Activated CD4-positive, alpha-beta memory T cell treated with anti-CD3 and anti-CD28 coated beads for 36 hours (primary cell): ENCODE measurements at regions of chr20 and their contacts with region 1.

Region 1: DNA sequence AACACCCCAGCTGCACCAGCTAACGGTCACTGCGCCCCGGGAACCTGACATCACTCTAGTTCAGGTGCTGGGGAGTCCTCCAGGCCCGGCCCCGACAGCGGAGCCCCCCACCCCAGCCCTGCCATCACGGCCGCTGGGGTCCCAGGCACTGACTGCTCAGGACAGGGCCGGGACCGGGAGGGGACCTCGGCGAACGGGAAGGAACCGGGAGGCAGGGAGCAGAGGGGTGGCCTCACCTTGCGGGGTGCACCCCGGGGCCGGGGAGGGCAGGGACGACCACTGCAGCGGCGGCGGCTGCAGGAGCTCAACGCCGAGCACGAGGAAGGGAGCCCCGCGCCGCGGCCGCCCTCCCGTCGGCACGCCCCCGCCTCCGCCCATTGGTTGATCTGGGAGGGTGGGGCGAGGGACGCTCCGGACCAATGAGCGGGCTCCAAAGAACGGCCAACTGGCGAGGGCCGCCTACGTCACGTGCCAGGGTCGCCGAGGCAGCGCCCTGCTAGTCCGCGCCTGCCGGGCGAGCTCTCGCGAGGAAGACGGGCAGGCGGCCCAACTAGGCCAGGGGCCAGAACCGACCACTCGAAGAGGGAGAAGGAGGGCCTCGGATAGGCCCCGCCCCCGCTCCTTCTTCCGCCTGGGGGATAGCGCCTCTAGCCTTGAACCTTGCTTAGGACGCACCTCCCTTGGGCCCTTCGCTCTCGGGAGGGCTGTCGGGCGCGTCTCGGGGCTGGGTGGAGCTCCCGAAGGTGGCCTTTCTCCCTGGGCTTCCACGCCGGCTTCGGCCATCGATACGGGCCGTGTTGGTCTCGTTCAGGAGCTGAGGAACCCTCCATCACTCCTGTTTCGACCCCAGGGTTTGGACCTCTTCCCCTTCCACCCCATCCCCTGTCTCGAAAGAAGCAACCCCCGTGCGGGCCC is at the start of gene ADISSP:
- DNase-seq: peak; percentile 99
- H3K4me3 Mint-ChIP-seq: peak within 1 kb of the TSS; percentile 87
- H3K27ac Mint-ChIP-seq: peak within 1 kb of the TSS; percentile 84
- H3K4me1 Mint-ChIP-seq: peaks cover 23% of the 10 kb centered on the region
- H3K27me3 Mint-ChIP-seq: no peaks in the 10 kb centered on the region
- total RNA-seq, gene ADISSP: 50.6 to 51.4 TPM

Region 2: GRCh38 chr20:3679749-3680700 is 87.7 kb before region 1 on chr20:
- CTCF ChIA-PET with region 1: interaction called, 11 read pairs
- POLR2A ChIA-PET with region 1: no interaction called
- intact Hi-C with region 1: no loop called
- DNase-seq: no peak
- H3K4me3 Mint-ChIP-seq: no peak overlapping the region
- H3K27ac Mint-ChIP-seq: no peak overlapping the region
- H3K4me1 Mint-ChIP-seq: no peaks in the 10 kb centered on the region
- H3K27me3 Mint-ChIP-seq: peaks cover 38% of the 10 kb centered on the region

Region 3: GRCh38 chr20:3753098-3753980 is 14.3 kb before region 1 on chr20:
- CTCF ChIA-PET with region 1: interaction called, 19 read pairs
- POLR2A ChIA-PET with region 1: no interaction called
- intact Hi-C with region 1: loop called (anchors 1 kb)
- DNase-seq: peak; percentile 75
- H3K4me3 Mint-ChIP-seq: no peak overlapping the region
- H3K27ac Mint-ChIP-seq: peak overlapping the region; percentile 58
- H3K4me1 Mint-ChIP-seq: peaks cover 6% of the 10 kb centered on the region
- H3K27me3 Mint-ChIP-seq: no peaks in the 10 kb centered on the region

Region 4: GRCh38 chr20:3786665-3787323 is 19.1 kb after region 1 on chr20 and contains the start of gene CENPB:
- CTCF ChIA-PET with region 1: interaction called, 16 read pairs
- POLR2A ChIA-PET with region 1: interaction called, 18 read pairs
- intact Hi-C with region 1: loop called (anchors 1 kb)
- DNase-seq: peak; percentile 93
- H3K4me3 Mint-ChIP-seq: peak within 1 kb of the TSS; percentile 83
- H3K27ac Mint-ChIP-seq: peak within 1 kb of the TSS; percentile 79
- H3K4me1 Mint-ChIP-seq: peaks cover 38% of the 10 kb centered on the region
- H3K27me3 Mint-ChIP-seq: no peaks in the 10 kb centered on the region
- total RNA-seq, gene CENPB: 50.1 to 51.9 TPM

Region 5: DNA sequence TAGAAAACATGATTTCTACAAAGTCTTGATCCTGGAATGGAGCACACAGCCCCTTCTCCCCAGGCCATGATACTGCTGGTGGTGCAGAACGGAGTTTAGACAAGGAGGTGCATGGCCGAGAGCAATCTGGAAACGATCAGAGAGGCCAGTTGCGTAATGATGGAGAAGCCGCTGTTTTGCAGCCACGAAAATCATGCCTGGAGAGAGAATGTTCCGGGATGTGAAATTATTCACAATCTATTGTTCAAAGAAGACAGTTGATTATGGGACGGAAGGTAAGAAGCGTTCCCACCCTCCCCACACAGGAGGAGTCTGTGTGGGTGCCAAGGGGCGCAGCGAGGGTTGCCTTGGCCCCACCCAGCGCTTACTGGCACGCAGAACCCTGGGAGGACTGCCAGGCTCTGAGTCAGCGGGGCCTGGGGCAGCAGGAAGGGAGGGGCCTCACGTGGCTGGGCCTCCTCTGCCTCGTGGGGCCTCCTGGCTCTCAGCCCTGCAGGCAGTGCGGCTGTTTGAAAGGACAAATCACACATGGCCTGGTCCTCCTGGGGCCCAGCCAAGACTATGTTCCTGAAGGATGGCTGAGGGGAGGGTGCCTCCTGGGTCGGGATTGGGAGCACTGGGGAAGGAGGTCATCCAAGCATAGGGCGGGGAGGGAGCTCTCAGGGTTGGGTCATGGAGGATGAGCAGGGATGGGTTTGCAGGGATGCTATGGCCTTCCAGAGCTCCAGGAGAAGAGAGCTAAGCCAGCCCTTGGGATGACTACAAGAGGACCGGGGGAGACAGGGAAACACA is 44.0 kb after region 1 on chr20:
- CTCF ChIA-PET with region 1: interaction called, 3 read pairs
- POLR2A ChIA-PET with region 1: interaction called, 7 read pairs
- intact Hi-C with region 1: loop called (anchors 2 kb)
- DNase-seq: peak; percentile 97
- H3K4me3 Mint-ChIP-seq: peak overlapping the region; percentile 82
- H3K27ac Mint-ChIP-seq: peak overlapping the region; percentile 99
- H3K4me1 Mint-ChIP-seq: peaks cover 66% of the 10 kb centered on the region
- H3K27me3 Mint-ChIP-seq: no peaks in the 10 kb centered on the region

Region 6: GRCh38 chr20:3854462-3854871 is 86.8 kb after region 1 on chr20:
- CTCF ChIA-PET with region 1: interaction called, 12 read pairs
- POLR2A ChIA-PET with region 1: no interaction called
- intact Hi-C with region 1: no loop called
- DNase-seq: no peak
- H3K4me3 Mint-ChIP-seq: no peak overlapping the region
- H3K27ac Mint-ChIP-seq: peak overlapping the region; percentile 23
- H3K4me1 Mint-ChIP-seq: peaks cover 2% of the 10 kb centered on the region
- H3K27me3 Mint-ChIP-seq: no peaks in the 10 kb centered on the region

Region 7: DNA sequence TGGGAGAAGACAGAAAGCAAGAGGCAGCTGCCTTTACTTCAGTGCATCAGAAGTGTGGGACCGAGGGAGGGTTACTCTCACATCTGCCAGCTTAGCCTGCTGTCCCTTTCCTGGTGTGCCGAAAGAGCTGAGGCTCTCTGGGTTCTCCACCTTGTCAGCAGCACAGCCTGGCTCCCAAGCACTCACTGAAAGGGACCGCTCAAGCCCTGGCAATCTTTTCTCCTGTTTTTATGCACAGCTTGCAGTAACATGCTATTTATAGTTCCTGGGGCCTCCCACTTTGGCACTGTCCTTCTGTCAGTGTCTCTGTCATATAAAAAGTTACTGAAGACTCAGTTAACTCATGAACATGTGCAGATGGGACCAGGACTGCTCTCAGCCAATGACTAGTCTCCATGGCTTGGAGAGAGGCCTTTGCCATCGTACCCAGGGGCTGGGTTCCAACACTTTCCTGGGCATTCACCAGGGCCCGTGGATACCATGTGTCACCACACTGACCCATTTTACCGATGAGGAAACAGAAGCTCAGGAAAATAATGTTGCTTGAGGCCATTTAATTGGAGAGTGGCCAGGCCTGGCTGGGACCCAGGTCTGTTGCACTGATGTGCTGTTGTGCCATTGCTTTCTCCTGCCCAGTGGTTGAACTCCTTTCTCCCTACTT is 167.7 kb after region 1 on chr20:
- CTCF ChIA-PET with region 1: no interaction called
- POLR2A ChIA-PET with region 1: no interaction called
- intact Hi-C with region 1: no loop called
- DNase-seq: no peak
- H3K4me3 Mint-ChIP-seq: no peak overlapping the region
- H3K27ac Mint-ChIP-seq: no peak overlapping the region
- H3K4me1 Mint-ChIP-seq: peaks cover 18% of the 10 kb centered on the region
- H3K27me3 Mint-ChIP-seq: no peaks in the 10 kb centered on the region